Posterior vena cava (tissue), 2 donors: ENCODE measurements at regions of chr11 and their contacts with region 1.

Region 1: DNA sequence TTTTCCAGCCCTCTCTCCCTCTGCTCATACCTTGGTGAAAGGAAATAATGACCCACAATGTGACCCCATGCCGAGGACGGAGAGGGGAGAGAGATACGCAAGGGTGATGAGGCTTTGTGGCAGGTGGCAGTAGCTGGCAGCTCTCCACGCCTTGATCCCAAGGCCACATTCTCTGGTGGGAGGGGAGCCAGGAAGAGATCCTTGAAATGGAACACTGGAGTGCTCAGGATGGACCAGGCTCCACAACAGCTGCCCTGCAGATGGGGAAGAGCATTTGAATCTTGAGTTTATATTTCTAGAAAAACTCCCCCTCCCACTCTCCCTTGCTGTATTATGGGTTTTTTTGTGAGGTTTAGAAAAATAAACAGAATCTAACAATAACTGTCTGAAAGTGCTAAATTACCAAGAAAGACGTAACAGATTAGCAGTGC is 61.6 kb upstream of the CDON start:
- DNase-seq: no peak

Region 2: GRCh38 chr11:125096200-125096599 is 1028.0 kb before region 1 on chr11:
- intact Hi-C with region 1: loop called in 1 of 2 experiments (anchors 5 kb)
- DNase-seq: no peak

Region 3: GRCh38 chr11:126149759-126150625 is 25.7 kb after region 1 on chr11:
- intact Hi-C with region 1: loop called in 1 of 2 experiments (anchors 1 kb)
- DNase-seq: no peak